Calu3 (cell line): ENCODE measurements at regions of chr18 and their contacts with region 1.

Region 1: GRCh38 chr18:48663931-48664847 is 125.4 kb downstream of the CTIF start:
- DNase-seq: peak; percentile 87
- H3K4me3 Mint-ChIP-seq: no peak overlapping the region
- H3K27ac Mint-ChIP-seq: no peak overlapping the region
- H3K4me1 Mint-ChIP-seq: peaks cover 45% of the 10 kb centered on the region
- H3K27me3 Mint-ChIP-seq: no peaks in the 10 kb centered on the region
- CTCF ChIP-seq: peak; percentile 95

Region 2: GRCh38 chr18:48488388-48488850 is 175.8 kb before region 1 on chr18:
- CTCF ChIA-PET with region 1: interaction called, 3 read pairs
- intact Hi-C with region 1: loop called (anchors 1 kb)
- DNase-seq: peak; percentile 88
- H3K4me3 Mint-ChIP-seq: no peak overlapping the region
- H3K27ac Mint-ChIP-seq: peak overlapping the region; percentile 73
- H3K4me1 Mint-ChIP-seq: peaks cover 52% of the 10 kb centered on the region
- H3K27me3 Mint-ChIP-seq: no peaks in the 10 kb centered on the region
- CTCF ChIP-seq: no peak

Region 3: GRCh38 chr18:48540251-48541025 is 123.8 kb before region 1 on chr18:
- CTCF ChIA-PET with region 1: no interaction called
- intact Hi-C with region 1: loop called (anchors 5 kb)
- DNase-seq: peak; percentile 73
- H3K4me3 Mint-ChIP-seq: peak overlapping the region; percentile 97
- H3K27ac Mint-ChIP-seq: no peak overlapping the region
- H3K4me1 Mint-ChIP-seq: peaks cover 10% of the 10 kb centered on the region
- H3K27me3 Mint-ChIP-seq: no peaks in the 10 kb centered on the region
- CTCF ChIP-seq: peak; percentile 18

Region 4: DNA sequence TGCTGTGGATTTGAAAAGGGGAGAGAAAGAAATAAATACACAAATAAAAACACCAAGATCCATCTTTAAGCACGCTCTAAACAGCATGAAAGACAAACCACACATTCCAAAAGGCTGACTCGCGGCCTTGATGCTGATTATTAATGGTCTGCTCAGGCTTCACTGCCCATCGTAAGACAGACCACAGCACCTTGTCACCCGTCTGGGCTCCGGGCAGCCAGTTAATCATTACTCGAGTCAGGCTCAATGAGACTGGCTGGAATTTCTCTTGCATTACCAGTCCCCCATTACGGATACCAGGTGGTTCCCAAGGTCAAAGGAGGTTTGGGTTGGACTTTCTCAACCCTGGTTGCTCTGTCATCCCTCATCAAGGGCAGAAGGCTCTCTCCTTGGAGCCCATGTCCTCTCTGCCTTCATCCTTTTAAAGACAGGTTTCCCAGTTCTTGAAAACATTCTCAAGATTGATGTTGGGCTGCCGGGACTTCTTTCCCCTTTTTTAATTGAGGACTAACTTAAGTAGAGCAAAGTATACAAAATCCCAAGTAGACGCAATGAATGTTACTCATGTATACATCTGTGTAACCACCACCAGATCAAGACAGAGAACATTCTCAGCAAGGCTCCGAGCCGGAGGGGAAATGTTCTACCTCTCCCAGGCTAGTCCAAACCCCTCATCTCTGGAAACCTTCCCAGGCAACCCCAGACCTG is 278.5 kb after region 1 on chr18:
- CTCF ChIA-PET with region 1: no interaction called
- intact Hi-C with region 1: no loop called
- DNase-seq: peak; percentile 90
- H3K4me3 Mint-ChIP-seq: peak overlapping the region; percentile 51
- H3K27ac Mint-ChIP-seq: peak overlapping the region; percentile 64
- H3K4me1 Mint-ChIP-seq: peaks cover 96% of the 10 kb centered on the region
- H3K27me3 Mint-ChIP-seq: no peaks in the 10 kb centered on the region
- CTCF ChIP-seq: no peak